ENCODE measurements at regions of chr12 and their contacts with region 1.

Region 1: DNA sequence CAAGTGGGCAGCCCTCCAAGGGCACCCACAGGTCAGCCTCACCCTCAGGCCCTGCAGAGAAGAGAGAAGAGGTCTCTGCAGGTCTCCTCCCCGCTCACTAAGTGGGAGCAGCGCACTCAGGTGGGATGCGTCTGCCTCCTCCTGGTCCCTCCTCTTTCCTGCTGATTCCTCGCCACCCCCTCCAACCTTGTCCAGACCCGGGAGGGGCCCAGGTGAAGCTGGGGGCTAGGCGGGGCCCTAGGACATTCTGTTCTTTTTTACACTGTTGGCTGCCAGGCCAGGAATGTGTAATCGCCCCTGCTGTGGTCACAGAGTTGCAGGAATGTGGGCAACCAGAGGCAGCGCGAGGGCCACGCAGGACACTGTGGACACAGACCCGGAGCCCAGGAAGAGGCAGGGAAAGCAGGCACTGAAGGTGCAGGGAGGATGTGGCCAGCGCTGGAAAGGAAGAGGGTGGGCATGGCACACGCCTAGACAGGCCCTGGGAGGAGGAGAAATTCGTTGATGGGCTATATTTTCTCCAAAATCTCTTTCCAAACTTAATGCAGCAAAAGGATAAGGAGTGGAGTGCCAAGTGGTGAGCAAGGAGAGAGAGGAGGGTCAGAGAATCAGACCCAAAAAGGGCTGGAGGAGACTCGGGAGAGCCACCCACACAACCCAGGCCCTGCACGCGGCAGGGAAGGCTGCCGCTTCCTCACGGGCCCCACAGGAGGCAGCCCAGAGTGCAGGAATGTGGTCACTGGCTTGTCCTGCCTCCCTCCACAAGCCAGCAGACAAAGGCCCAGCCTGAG is 911 bp upstream of the SCNN1A start:
- DNase-seq: peak; percentile 76
- ATAC-seq: peak; percentile 61
- H3K4me3 Mint-ChIP-seq: peak overlapping the region; percentile 91
- H3K27ac Mint-ChIP-seq: peak overlapping the region; percentile 99
- H3K4me1 Mint-ChIP-seq: peaks cover 77% of the 10 kb centered on the region
- H3K27me3 Mint-ChIP-seq: peaks cover 3% of the 10 kb centered on the region
- CTCF ChIP-seq: no peak

Region 2: DNA sequence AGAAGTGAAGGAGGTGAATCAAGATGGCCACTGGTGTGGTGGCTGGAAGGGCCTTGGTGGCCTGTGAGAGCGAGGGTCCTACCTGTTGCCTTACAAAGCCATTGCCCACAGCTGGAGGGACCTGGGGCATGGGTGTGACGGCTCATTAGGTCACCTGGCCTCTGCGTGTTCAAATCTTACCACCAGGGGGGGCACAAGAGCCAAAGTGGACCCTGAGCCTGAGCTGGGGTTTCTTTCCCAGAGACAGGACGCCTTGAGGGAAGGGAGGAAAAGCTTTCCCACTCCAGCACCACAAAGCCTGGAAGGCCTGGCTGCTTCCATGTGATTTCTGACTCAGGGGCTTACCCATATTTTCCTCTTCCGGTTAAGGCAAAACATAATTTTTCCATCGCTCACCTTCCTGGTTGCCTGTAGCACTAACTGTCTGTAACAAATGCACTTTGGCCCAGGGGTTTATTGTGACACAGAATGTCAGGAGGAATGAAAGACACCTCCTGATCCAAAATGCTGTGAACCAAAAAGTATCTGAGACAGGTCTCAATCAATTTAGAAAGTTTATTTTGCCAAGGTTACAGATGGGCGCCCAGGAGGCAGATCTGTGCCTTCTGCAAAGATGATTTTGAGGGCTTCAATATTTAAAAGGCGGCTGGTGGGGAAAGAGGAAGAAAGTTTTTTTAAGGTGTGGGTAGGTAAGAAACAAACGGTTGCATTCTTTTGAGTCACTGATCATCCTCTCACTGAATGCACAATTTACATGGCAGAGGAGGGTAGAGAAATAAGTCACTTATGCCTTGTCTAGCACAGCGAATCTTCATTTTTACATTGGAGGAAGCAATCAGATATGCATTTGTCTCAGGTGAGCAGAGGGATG is 180.4 kb before region 1 on chr12:
- CTCF ChIA-PET with region 1: no interaction called
- POLR2A ChIA-PET with region 1: no interaction called
- DNase-seq: peak; percentile 95
- ATAC-seq: peak; percentile 60
- H3K4me3 Mint-ChIP-seq: no peak overlapping the region
- H3K27ac Mint-ChIP-seq: peak overlapping the region; percentile 79
- H3K4me1 Mint-ChIP-seq: peaks cover 63% of the 10 kb centered on the region
- H3K27me3 Mint-ChIP-seq: peaks cover 7% of the 10 kb centered on the region; the same call in 1 of the 2 replicates
- CTCF ChIP-seq: peak; percentile 99

Region 3: DNA sequence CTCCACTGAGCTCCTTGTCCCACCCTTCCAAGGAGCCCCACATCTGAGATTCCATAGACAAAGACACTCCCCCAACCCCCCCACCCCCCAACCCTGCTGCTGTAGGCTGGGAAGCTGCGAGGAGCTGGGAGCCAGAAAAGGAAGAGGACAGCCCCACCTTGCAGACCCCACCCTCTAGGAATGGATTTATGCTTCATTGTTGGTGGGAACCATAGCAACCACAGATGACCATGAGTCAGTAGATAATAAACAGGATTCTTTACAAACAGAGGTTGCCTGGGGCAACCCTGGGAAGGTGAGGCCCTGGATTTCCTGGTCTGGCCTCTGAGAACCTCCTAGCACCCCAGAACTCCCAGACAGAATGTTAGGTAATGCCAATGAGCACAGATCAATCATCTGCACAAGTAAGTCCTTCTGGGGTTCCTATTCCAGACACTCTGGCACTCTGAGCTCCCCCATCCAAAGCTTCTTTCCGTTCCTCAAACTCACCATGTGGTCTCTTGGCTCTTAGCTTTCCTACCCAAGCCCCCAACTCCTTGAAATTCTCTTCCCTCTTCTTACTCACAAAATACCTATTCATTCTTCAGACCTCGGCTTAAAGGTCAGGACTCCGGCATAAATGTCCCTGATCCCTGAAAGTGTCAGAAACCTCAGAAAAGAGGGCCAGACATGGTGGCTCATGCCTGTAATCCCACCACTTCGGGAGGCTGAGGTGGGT is 81.0 kb before region 1 on chr12:
- CTCF ChIA-PET with region 1: no interaction called
- POLR2A ChIA-PET with region 1: interaction called, 10 read pairs
- DNase-seq: no peak
- ATAC-seq: no peak
- H3K4me3 Mint-ChIP-seq: no peak overlapping the region
- H3K27ac Mint-ChIP-seq: no peak overlapping the region
- H3K4me1 Mint-ChIP-seq: peaks cover 19% of the 10 kb centered on the region
- H3K27me3 Mint-ChIP-seq: peaks cover 4% of the 10 kb centered on the region; the same call in 1 of the 2 replicates
- CTCF ChIP-seq: no peak

Region 4: DNA sequence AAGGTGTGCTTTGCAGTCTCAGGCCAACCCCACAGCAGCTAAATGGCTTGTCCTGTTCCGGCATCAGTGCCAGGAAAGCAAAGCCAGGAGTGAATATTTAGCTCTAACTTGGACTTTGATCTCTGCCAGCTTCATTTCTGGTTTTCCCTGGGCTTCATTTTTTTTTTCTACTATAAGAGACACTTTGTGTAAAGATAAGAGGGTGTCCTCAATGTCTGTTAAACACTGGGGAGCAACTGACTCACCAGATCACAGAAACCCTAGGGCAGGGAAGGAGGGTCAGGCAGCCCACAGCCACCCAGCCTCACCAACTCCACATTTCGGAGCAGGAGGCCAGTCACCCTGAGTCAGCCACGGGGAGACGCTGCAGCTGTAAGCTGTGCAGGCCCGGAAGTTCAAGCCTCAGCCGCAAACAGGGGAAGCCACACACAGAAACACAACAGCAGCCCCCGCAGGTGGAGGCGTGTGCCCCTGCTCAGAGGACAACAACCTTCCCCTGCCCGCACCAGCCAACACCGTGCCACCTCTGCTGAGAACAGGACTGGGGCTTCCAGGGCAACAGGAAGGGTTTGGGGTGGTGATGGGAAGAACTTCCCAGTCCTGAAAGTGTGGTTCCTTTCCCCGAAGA is 40.7 kb before region 1 on chr12:
- CTCF ChIA-PET with region 1: interaction called, 24 read pairs
- POLR2A ChIA-PET with region 1: interaction called, 48 read pairs
- DNase-seq: peak; percentile 51
- ATAC-seq: peak; percentile 10
- H3K4me3 Mint-ChIP-seq: no peak overlapping the region; the same call in none of the 2 replicates
- H3K27ac Mint-ChIP-seq: no peak overlapping the region
- H3K4me1 Mint-ChIP-seq: peaks cover 18% of the 10 kb centered on the region
- H3K27me3 Mint-ChIP-seq: no peaks in the 10 kb centered on the region
- CTCF ChIP-seq: no peak

Region 5: GRCh38 chr12:6341417-6342139 is 34.7 kb before region 1 on chr12 and contains the start of gene TNFRSF1A:
- CTCF ChIA-PET with region 1: interaction called, 24 read pairs
- POLR2A ChIA-PET with region 1: interaction called, 48 read pairs
- DNase-seq: no peak
- ATAC-seq: peak; percentile 47
- H3K4me3 Mint-ChIP-seq: no peak within 1 kb of the TSS
- H3K27ac Mint-ChIP-seq: peak within 1 kb of the TSS; percentile 86
- H3K4me1 Mint-ChIP-seq: peaks cover 32% of the 10 kb centered on the region
- H3K27me3 Mint-ChIP-seq: no peaks in the 10 kb centered on the region
- CTCF ChIP-seq: no peak
- total RNA-seq, gene TNFRSF1A: 32.3 to 44.1 TPM (median 32.4 TPM) in 3 replicates

Region 6: GRCh38 chr12:6355491-6356371 is 20.5 kb before region 1 on chr12:
- CTCF ChIA-PET with region 1: interaction called, 68 read pairs
- POLR2A ChIA-PET with region 1: interaction called, 14 read pairs
- DNase-seq: peak; percentile 73
- ATAC-seq: peak; percentile 96
- H3K4me3 Mint-ChIP-seq: no peak overlapping the region
- H3K27ac Mint-ChIP-seq: peak overlapping the region; percentile 34; the same call in 1 of the 2 replicates
- H3K4me1 Mint-ChIP-seq: peaks cover 25% of the 10 kb centered on the region
- H3K27me3 Mint-ChIP-seq: no peaks in the 10 kb centered on the region
- CTCF ChIP-seq: no peak

Region 7: DNA sequence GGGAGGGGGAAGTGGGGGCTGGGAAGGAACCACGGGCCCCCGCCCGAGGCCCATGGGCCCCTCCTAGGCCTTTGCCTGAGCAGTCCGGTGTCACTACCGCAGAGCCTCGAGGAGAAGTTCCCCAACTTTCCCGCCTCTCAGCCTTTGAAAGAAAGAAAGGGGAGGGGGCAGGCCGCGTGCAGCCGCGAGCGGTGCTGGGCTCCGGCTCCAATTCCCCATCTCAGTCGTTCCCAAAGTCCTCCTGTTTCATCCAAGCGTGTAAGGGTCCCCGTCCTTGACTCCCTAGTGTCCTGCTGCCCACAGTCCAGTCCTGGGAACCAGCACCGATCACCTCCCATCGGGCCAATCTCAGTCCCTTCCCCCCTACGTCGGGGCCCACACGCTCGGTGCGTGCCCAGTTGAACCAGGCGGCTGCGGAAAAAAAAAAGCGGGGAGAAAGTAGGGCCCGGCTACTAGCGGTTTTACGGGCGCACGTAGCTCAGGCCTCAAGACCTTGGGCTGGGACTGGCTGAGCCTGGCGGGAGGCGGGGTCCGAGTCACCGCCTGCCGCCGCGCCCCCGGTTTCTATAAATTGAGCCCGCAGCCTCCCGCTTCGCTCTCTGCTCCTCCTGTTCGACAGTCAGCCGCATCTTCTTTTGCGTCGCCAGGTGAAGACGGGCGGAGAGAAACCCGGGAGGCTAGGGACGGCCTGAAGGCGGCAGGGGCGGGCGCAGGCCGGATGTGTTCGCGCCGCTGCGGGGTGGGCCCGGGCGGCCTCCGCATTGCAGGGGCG is 157.8 kb after region 1 on chr12 and contains the start of gene GAPDH:
- CTCF ChIA-PET with region 1: interaction called, 4 read pairs
- POLR2A ChIA-PET with region 1: interaction called, 23 read pairs
- DNase-seq: peak; percentile 87
- ATAC-seq: peak; percentile 51
- H3K4me3 Mint-ChIP-seq: peak within 1 kb of the TSS; percentile 87
- H3K27ac Mint-ChIP-seq: peak within 1 kb of the TSS; percentile 99
- H3K4me1 Mint-ChIP-seq: peaks cover 39% of the 10 kb centered on the region
- H3K27me3 Mint-ChIP-seq: no peaks in the 10 kb centered on the region
- CTCF ChIP-seq: no peak
- total RNA-seq, gene GAPDH: 4,276 to 4,694 TPM (median 4,682 TPM) in 3 replicates